Naive thymus-derived CD4-positive, alpha-beta T cell (primary cell): ENCODE measurements at regions of chr13 and their contacts with region 1.

Region 1: DNA sequence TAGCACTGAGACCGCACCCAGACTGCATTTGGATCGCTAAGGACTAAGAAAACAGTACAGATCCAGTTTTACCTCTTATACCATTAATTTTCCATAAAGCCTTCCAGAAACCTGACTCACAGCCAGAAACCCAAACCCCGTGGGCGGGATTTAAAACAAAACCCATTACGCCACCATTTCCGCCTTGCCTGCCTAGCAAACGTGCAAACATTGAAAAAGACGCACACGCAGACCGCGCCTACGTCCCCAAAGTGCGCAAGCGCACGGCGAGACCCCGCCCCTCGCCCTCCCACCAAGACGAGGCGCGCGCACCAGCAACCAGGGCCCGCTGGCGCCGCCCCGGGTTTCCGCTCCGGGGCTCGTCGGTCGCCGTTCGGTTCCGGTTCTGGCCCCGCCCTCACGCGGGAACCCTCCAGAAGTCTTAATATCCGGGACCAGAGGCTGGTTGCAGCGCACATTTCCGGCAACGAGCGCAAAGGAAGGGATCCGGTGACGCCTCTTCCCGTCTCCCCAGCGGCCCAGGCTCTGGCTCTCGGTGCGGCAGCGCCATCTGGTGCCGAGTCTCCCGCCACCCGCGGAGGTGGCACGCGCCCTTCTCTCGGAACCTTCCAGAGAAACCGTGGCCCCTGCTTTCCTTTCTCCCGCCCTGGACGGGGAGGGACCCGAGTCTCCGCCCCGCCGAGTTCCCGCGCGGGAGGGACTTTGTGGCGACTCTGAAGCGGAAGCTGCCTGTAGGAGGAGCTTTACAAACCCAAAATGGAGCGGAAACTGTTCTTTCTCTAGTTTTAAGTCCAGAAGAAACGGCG is 256.9 kb upstream of the STARD13 start:
- DNase-seq: peak; percentile 98 to 100 (median 99)
- ATAC-seq: peak; percentile 89
- H3K4me3 ChIP-seq: peak overlapping the region; percentile 85
- H3K4me3 Mint-ChIP-seq: peak overlapping the region; percentile 86 to 98 (median 95)
- H3K27ac ChIP-seq: peak overlapping the region; percentile 99
- H3K27ac Mint-ChIP-seq: peak overlapping the region; percentile 98 to 100 (median 100)
- H3K4me1 ChIP-seq: peaks cover 27 to 35% of the 10 kb centered on the region in 2 donors
- H3K4me1 Mint-ChIP-seq: peaks cover 24 to 64% (median 49%) of the 10 kb centered on the region in 7 donors
- H3K27me3 ChIP-seq: no peaks in the 10 kb centered on the region
- H3K27me3 Mint-ChIP-seq: no peaks in the 10 kb centered on the region

Region 2: DNA sequence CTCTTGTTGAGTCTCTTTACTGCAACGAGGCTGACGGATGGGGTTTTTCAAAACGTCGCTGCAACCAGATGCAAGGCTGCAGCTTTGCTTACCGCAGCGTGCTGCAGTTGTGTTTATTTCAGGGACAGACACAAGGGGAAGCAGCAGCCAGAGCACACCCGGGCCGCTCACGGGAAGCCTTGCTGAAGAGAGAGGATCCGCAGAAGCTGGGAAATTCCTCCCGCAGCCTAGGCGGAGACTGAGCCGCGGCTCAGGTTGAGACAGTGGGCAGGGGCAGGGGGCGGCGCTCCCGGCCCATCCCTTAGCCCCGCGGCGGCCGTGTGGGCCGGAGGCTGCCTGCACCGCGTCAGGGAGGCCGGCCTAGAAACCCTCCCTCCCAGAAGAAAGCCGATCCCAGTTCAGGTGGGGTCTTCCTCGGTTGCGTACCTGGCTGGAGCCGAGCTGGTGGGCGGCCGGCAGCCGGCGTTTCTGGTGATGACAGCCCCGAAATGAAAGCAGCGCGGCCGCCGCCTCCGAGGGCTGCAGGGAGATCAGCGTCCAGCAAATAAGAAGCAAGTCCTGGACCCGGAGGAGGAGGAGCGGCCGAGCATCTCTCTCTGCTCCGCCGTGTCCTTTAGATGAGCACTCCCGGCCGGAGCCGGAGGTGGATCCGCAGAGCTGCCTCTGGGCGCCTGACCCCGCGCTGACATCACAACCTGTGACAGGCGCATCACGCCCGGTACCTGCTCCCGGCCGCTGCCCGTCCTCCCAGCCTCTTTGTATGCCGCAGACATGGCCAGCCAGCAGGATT is 1511.3 kb before region 1 on chr13 and contains the start of gene FRY:
- CTCF ChIA-PET with region 1: no interaction called
- POLR2A ChIA-PET with region 1: no interaction called
- intact Hi-C with region 1: loop called in 1 of 2 experiments (anchors 5 kb)
- DNase-seq: peak; percentile 34 to 67 (median 58)
- ATAC-seq: peak; percentile 86
- H3K4me3 ChIP-seq: peak within 1 kb of the TSS; percentile 71
- H3K4me3 Mint-ChIP-seq: peak within 1 kb of the TSS; percentile 82 to 99 (median 90)
- H3K27ac ChIP-seq: peak within 1 kb of the TSS; percentile 72
- H3K27ac Mint-ChIP-seq: peak within 1 kb of the TSS; percentile 77 to 97 (median 83)
- H3K4me1 ChIP-seq: peaks cover 3 to 16% of the 10 kb centered on the region in 2 donors
- H3K4me1 Mint-ChIP-seq: peaks cover 7 to 65% (median 49%) of the 10 kb centered on the region in 7 donors
- H3K27me3 ChIP-seq: no peaks in the 10 kb centered on the region
- H3K27me3 Mint-ChIP-seq: peaks cover 7 to 49% (median 13%) of the 10 kb centered on the region in 5 donors
- total RNA-seq, gene FRY: 9.9 to 39.9 (median 24.0) TPM

Region 3: DNA sequence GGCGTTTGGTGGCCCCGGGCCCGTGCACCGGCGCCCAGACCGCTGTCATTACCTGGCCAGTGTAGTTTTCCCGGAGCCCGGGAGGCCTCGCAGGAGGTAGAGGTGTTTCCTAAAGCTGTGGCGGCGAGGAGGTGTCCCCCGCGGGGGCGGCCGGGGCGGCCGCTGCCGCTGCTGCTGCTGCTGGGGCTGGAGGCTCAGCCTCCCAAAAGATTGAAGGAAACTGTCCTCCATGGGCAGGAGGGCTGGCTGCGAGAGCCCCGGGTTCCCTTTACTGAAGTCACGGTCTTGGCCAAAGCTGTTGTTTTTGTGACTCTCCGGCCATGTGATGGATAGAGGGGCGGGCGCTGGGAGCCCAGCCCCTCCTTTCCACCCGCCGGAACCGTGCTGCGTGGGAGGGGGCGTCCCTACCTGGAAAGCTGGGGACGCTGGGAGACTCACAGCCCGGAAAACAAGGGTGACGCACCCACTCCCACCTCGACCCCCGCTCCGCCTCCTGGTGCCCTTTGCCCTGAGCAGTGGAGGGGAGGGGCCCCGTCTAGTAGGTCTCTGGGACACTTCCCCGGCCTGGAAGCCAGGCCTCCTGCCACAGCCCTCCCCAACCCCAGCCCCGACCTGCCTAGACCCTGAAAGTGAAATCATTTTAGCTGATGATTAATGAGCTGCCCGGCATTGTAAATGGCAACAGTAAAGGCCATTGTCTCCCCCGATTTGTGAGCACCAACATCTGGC is 1114.5 kb before region 1 on chr13 and contains the start of gene N4BP2L1:
- CTCF ChIA-PET with region 1: no interaction called
- POLR2A ChIA-PET with region 1: interaction called, 11 read pairs
- intact Hi-C with region 1: loop called (anchors 1 kb)
- DNase-seq: peak; percentile 60 to 91 (median 78)
- ATAC-seq: peak; percentile 81
- H3K4me3 ChIP-seq: peak within 1 kb of the TSS; percentile 64
- H3K4me3 Mint-ChIP-seq: peak within 1 kb of the TSS; percentile 90 to 100 (median 94)
- H3K27ac ChIP-seq: peak within 1 kb of the TSS; percentile 98
- H3K27ac Mint-ChIP-seq: peak within 1 kb of the TSS; percentile 95 to 99 (median 97)
- H3K4me1 ChIP-seq: peaks cover 19 to 20% of the 10 kb centered on the region in 2 donors
- H3K4me1 Mint-ChIP-seq: peaks cover 34 to 50% (median 48%) of the 10 kb centered on the region in 7 donors
- H3K27me3 ChIP-seq: no peaks in the 10 kb centered on the region
- H3K27me3 Mint-ChIP-seq: no peaks in the 10 kb centered on the region
- total RNA-seq, gene N4BP2L1: 30.4 to 58.0 (median 47.1) TPM

Region 4: GRCh38 chr13:32650705-32651311 is 891.7 kb before region 1 on chr13:
- CTCF ChIA-PET with region 1: no interaction called
- POLR2A ChIA-PET with region 1: no interaction called
- intact Hi-C with region 1: loop called (anchors 2 to 5 kb)
- DNase-seq: peak in 8 of 9 donors; percentile 16 to 55 (median 41)
- ATAC-seq: peak; percentile 91
- H3K4me3 ChIP-seq: no peak overlapping the region
- H3K4me3 Mint-ChIP-seq: no peak overlapping the region
- H3K27ac ChIP-seq: no peak overlapping the region
- H3K27ac Mint-ChIP-seq: peak overlapping the region in 1 of 9 donors; percentile 21
- H3K4me1 ChIP-seq: peaks cover 0 to 10% of the 10 kb centered on the region in 2 donors
- H3K4me1 Mint-ChIP-seq: peaks cover 23 to 55% (median 40%) of the 10 kb centered on the region in 7 donors
- H3K27me3 ChIP-seq: no peaks in the 10 kb centered on the region
- H3K27me3 Mint-ChIP-seq: no peaks in the 10 kb centered on the region

Region 5: GRCh38 chr13:33017323-33017929 is 525.1 kb before region 1 on chr13:
- CTCF ChIA-PET with region 1: no interaction called
- POLR2A ChIA-PET with region 1: no interaction called
- intact Hi-C with region 1: loop called in 1 of 2 experiments (anchors 2 kb)
- DNase-seq: peak in 6 of 9 donors; percentile 6 to 47 (median 18)
- ATAC-seq: peak; percentile 80
- H3K4me3 ChIP-seq: peak overlapping the region; percentile 30
- H3K4me3 Mint-ChIP-seq: peak overlapping the region; percentile 37 to 81 (median 73)
- H3K27ac ChIP-seq: no peak overlapping the region
- H3K27ac Mint-ChIP-seq: peak overlapping the region in 2 of 9 donors; percentile 49 to 66
- H3K4me1 ChIP-seq: peaks cover 3 to 7% of the 10 kb centered on the region in 2 donors
- H3K4me1 Mint-ChIP-seq: peaks cover 10 to 21% (median 15%) of the 10 kb centered on the region in 7 donors
- H3K27me3 ChIP-seq: peaks cover 4 to 7% of the 10 kb centered on the region in 2 donors
- H3K27me3 Mint-ChIP-seq: peaks cover 65 to 83% (median 71%) of the 10 kb centered on the region in 5 donors

Region 6: DNA sequence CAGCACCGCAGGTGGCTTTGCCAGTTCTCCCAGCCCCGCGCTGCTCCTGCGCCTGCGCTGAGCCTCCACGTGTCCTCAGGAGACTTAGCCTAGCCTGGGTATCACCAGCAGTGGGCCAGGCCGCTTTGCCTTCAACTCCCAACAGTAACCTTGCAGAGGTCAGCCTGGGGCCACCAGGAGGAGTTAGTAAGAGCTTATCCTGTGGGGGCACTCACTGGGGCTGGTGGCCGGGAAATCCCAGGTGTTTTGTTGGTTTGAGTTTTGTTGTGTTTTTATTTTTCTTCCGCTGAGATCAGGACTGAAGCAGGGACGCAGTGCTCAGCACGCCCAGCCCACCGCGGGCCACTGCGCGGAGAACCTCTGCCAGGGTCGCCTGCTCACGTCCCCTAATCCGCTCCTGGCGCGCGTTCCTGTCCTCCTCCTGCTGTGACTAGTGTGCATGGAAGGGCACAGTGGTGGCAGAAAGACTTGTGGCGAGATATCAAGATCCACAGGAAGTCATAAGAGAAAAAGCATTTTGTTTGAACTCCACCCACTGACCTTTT is 68.1 kb after region 1 on chr13:
- CTCF ChIA-PET with region 1: no interaction called
- POLR2A ChIA-PET with region 1: no interaction called
- intact Hi-C with region 1: loop called in 1 of 2 experiments (anchors 1 kb)
- DNase-seq: peak in 5 of 9 donors; percentile 1 to 53 (median 6)
- ATAC-seq: peak; percentile 75
- H3K4me3 ChIP-seq: peak overlapping the region; percentile 14
- H3K4me3 Mint-ChIP-seq: peak overlapping the region; percentile 6 to 84 (median 67)
- H3K27ac ChIP-seq: no peak overlapping the region
- H3K27ac Mint-ChIP-seq: peak overlapping the region in 8 of 9 donors; percentile 34 to 90 (median 70)
- H3K4me1 ChIP-seq: peaks cover 7 to 8% of the 10 kb centered on the region in 2 donors
- H3K4me1 Mint-ChIP-seq: peaks cover 12 to 35% (median 29%) of the 10 kb centered on the region in 7 donors
- H3K27me3 ChIP-seq: no peaks in the 10 kb centered on the region
- H3K27me3 Mint-ChIP-seq: peaks cover 0 to 12% (median 5%) of the 10 kb centered on the region in 5 donors

Region 7: GRCh38 chr13:33710924-33711323 is 168.4 kb after region 1 on chr13:
- CTCF ChIA-PET with region 1: no interaction called
- POLR2A ChIA-PET with region 1: no interaction called
- intact Hi-C with region 1: no loop called
- DNase-seq: no peak
- ATAC-seq: no peak
- H3K4me3 ChIP-seq: no peak overlapping the region
- H3K4me3 Mint-ChIP-seq: no peak overlapping the region
- H3K27ac ChIP-seq: no peak overlapping the region
- H3K27ac Mint-ChIP-seq: no peak overlapping the region
- H3K4me1 ChIP-seq: no peaks in the 10 kb centered on the region
- H3K4me1 Mint-ChIP-seq: no peaks in the 10 kb centered on the region
- H3K27me3 ChIP-seq: no peaks in the 10 kb centered on the region
- H3K27me3 Mint-ChIP-seq: peaks cover 5 to 26% (median 16%) of the 10 kb centered on the region in 5 donors

Region 8: DNA sequence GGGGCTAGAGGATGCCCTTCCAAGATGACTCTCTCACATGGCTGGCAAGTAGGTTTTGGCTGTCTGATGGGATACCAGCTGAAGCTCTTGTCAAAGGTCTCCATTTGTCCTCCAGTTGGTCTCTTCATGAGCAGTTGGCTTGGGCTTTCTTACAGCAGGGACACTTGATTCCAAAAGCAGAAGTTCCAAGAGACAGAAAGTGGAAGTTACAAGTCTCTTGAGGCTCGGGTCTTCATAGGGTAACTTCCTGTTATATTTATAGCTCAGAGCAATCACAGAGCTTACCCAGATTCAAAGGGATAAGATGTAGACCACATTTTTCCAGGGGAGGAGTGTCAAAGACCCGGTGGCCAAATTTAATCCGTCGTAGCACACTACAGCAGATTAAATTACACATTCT is 715.5 kb after region 1 on chr13:
- CTCF ChIA-PET with region 1: no interaction called
- POLR2A ChIA-PET with region 1: no interaction called
- intact Hi-C with region 1: no loop called
- DNase-seq: no peak
- ATAC-seq: peak; percentile 52
- H3K4me3 ChIP-seq: no peak overlapping the region
- H3K4me3 Mint-ChIP-seq: no peak overlapping the region
- H3K27ac ChIP-seq: no peak overlapping the region
- H3K27ac Mint-ChIP-seq: no peak overlapping the region
- H3K4me1 ChIP-seq: no peaks in the 10 kb centered on the region
- H3K4me1 Mint-ChIP-seq: peaks cover 0 to 5% (median 0%) of the 10 kb centered on the region in 7 donors
- H3K27me3 ChIP-seq: no peaks in the 10 kb centered on the region
- H3K27me3 Mint-ChIP-seq: peaks cover 0 to 10% (median 0%) of the 10 kb centered on the region in 5 donors

Region 9: GRCh38 chr13:34941835-34942731 is 1399.6 kb after region 1 on chr13 and contains the start of gene NBEA:
- CTCF ChIA-PET with region 1: no interaction called
- POLR2A ChIA-PET with region 1: no interaction called
- intact Hi-C with region 1: loop called (anchors 1 to 10 kb)
- DNase-seq: peak; percentile 73 to 90 (median 85)
- ATAC-seq: peak; percentile 82
- H3K4me3 ChIP-seq: peak within 1 kb of the TSS; percentile 43
- H3K4me3 Mint-ChIP-seq: peak within 1 kb of the TSS; percentile 72 to 94 (median 90)
- H3K27ac ChIP-seq: peak within 1 kb of the TSS; percentile 55
- H3K27ac Mint-ChIP-seq: peak within 1 kb of the TSS in 8 of 9 donors; percentile 18 to 85 (median 78)
- H3K4me1 ChIP-seq: peaks cover 0 to 17% of the 10 kb centered on the region in 2 donors
- H3K4me1 Mint-ChIP-seq: peaks cover 15 to 35% (median 28%) of the 10 kb centered on the region in 7 donors
- H3K27me3 ChIP-seq: peaks cover 0 to 9% of the 10 kb centered on the region in 2 donors
- H3K27me3 Mint-ChIP-seq: peaks cover 37 to 58% (median 47%) of the 10 kb centered on the region in 5 donors
- total RNA-seq, gene NBEA: 0.15 to 6.3 (median 4.3) TPM